ENCODE measurements at regions of chr6 and their contacts with region 1.

Region 1: DNA sequence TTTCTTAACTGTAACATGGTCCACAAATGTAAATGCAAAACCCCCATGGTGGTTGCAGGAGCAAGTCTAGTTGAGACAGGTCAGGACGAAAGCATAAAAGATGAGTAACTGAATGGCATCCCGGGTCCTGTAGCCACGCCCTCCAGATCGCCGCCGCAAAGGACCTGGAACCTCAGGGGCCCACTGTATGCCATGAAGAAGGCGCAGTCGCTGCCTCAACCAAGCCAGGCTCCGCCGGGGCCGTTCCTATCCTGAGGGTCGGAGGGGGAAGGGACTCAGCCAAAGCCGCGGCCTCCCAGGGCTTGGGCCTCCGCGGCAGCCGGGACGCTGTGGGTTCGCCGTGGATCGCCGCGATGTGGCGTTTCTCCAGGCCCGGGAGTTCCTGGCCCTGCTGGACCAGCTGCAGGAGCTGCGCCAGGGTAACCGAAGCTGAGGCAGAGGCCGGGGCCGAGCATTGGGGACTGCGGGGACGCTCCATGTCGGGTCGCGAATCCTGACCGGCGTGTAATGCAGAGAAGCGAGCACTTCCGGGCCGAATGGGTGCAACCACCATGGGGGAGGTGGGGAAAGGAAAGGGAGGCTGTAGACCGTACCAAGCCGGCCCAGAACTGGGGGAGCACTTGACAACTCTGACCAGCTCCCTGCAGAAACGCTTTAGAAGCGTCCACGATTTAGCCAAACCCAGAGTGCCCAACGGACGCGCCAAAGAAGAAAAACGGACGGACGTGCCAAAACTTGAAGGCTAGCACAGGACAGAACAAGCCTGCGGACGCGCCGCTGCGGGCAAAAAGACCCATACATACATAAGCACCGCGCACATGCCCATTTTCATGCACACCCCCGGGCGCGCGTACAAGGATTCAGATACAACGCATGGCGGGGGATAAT is 11.1 kb downstream of the RPL7L1 start:
- DNase-seq: peak; percentile 90
- ATAC-seq: peak; percentile 93
- H3K4me3 ChIP-seq: peak overlapping the region; percentile 85 to 92
- H3K27ac ChIP-seq: peak overlapping the region; percentile 96
- H3K4me1 ChIP-seq: peaks cover 3% of the 10 kb centered on the region; the same call in 1 of the 2 replicates
- H3K27me3 ChIP-seq: no peaks in the 10 kb centered on the region
- CTCF ChIP-seq: no peak

Region 2: GRCh38 chr6:42417641-42418112 is 472.9 kb before region 1 on chr6:
- CTCF ChIA-PET with region 1: no interaction called
- POLR2A ChIA-PET with region 1: interaction called, 10 read pairs
- in situ Hi-C with region 1: no loop called
- intact Hi-C with region 1: no loop called
- DNase-seq: no peak
- ATAC-seq: no peak
- H3K4me3 ChIP-seq: no peak overlapping the region
- H3K27ac ChIP-seq: no peak overlapping the region
- H3K4me1 ChIP-seq: peaks cover 10% of the 10 kb centered on the region; the same call in 1 of the 2 replicates
- H3K27me3 ChIP-seq: no peaks in the 10 kb centered on the region
- CTCF ChIP-seq: no peak

Region 3: GRCh38 chr6:42846505-42846904 is 44.0 kb before region 1 on chr6:
- CTCF ChIA-PET with region 1: interaction called, 4 read pairs
- POLR2A ChIA-PET with region 1: interaction called, 12 read pairs
- in situ Hi-C with region 1: no loop called
- intact Hi-C with region 1: no loop called
- DNase-seq: no peak
- ATAC-seq: no peak
- H3K4me3 ChIP-seq: no peak overlapping the region
- H3K27ac ChIP-seq: no peak overlapping the region
- H3K4me1 ChIP-seq: no peaks in the 10 kb centered on the region
- H3K27me3 ChIP-seq: no peaks in the 10 kb centered on the region
- CTCF ChIP-seq: no peak

Region 4: GRCh38 chr6:42928986-42929820 is 38.6 kb after region 1 on chr6 and contains the start of gene CNPY3:
- CTCF ChIA-PET with region 1: no interaction called
- POLR2A ChIA-PET with region 1: interaction called, 12 read pairs
- in situ Hi-C with region 1: no loop called
- intact Hi-C with region 1: no loop called
- DNase-seq: peak; percentile 80
- ATAC-seq: peak; percentile 96
- H3K4me3 ChIP-seq: peak within 1 kb of the TSS; percentile 82 to 97
- H3K27ac ChIP-seq: peak within 1 kb of the TSS; percentile 98
- H3K4me1 ChIP-seq: peaks cover 9% of the 10 kb centered on the region; the same call in 1 of the 2 replicates
- H3K27me3 ChIP-seq: no peaks in the 10 kb centered on the region
- CTCF ChIP-seq: no peak
- total RNA-seq, gene CNPY3: 72.8 TPM